Activated CD4-positive, alpha-beta T cell treated with anti-CD3 and anti-CD28 coated beads for 36 hours (primary cell): ENCODE measurements at regions of chr1 and their contacts with region 1.

Region 1: GRCh38 chr1:168342572-168343280 is 62.0 kb downstream of the TBX19 start:
- DNase-seq: peak; percentile 94
- ATAC-seq: peak; percentile 98
- H3K4me3 Mint-ChIP-seq: no peak overlapping the region
- H3K27ac Mint-ChIP-seq: peak overlapping the region; percentile 27
- H3K4me1 Mint-ChIP-seq: peaks cover 24% of the 10 kb centered on the region
- H3K27me3 Mint-ChIP-seq: no peaks in the 10 kb centered on the region

Region 2: GRCh38 chr1:168285419-168285790 is 57.3 kb before region 1 on chr1:
- CTCF ChIA-PET with region 1: no interaction called
- POLR2A ChIA-PET with region 1: no interaction called
- intact Hi-C with region 1: no loop called
- DNase-seq: no peak
- ATAC-seq: no peak
- H3K4me3 Mint-ChIP-seq: no peak overlapping the region
- H3K27ac Mint-ChIP-seq: no peak overlapping the region
- H3K4me1 Mint-ChIP-seq: peaks cover 20% of the 10 kb centered on the region
- H3K27me3 Mint-ChIP-seq: no peaks in the 10 kb centered on the region

Region 3: GRCh38 chr1:168328731-168329399 is 13.9 kb before region 1 on chr1:
- CTCF ChIA-PET with region 1: interaction called, 52 read pairs
- POLR2A ChIA-PET with region 1: no interaction called
- intact Hi-C with region 1: no loop called
- DNase-seq: no peak
- ATAC-seq: no peak
- H3K4me3 Mint-ChIP-seq: no peak overlapping the region
- H3K27ac Mint-ChIP-seq: no peak overlapping the region
- H3K4me1 Mint-ChIP-seq: no peaks in the 10 kb centered on the region
- H3K27me3 Mint-ChIP-seq: no peaks in the 10 kb centered on the region

Region 4: DNA sequence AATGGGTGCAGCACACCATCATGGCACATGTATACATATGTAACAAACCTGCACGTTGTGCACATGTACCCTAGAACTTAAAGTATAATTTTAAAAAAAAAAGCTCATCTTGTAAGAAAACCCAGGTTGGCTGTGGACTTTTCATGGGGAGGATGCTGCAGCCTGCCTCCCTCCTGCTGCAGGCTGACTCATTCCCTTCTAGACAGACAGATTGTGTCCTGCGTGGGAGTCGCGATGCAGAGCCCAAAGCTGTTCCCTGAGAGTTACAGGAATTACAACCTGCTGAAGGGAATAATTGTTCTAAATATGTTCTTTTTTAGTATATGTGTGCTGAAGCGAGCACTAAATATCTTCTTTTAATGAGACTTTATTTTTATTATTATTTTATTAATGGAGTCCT is 31.1 kb after region 1 on chr1:
- CTCF ChIA-PET with region 1: interaction called, 16 read pairs
- POLR2A ChIA-PET with region 1: no interaction called
- intact Hi-C with region 1: no loop called
- DNase-seq: no peak
- ATAC-seq: peak; percentile 49
- H3K4me3 Mint-ChIP-seq: no peak overlapping the region
- H3K27ac Mint-ChIP-seq: no peak overlapping the region
- H3K4me1 Mint-ChIP-seq: no peaks in the 10 kb centered on the region
- H3K27me3 Mint-ChIP-seq: no peaks in the 10 kb centered on the region

Region 5: DNA sequence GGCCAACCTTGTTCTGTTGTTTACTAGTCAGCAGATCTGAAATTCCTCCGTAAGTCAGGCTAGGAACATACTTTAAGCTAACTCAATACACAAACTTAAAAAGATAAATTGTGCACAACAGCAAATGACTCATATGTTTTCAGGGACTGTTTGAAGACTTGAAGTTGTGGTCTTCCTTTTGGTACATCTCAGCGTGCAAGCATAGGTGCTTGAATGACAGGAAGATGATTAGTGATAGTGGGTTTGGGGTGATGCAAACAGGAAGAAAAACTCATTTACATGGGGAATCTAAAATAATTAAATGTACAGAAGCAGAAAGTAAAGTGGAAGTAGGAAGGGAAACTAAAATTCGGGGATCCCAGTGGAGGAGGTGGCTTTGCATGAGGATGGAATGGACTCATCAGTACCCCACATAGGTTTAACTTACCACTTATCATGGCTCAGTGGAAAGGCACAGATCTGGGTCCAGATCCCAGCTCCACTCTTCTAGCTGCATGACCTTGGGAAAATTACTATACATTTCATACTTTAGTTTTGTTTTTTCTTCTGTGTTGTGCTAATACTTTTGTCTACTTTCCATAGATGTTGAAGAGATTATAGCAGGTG is 78.8 kb after region 1 on chr1:
- CTCF ChIA-PET with region 1: interaction called, 13 read pairs
- POLR2A ChIA-PET with region 1: no interaction called
- intact Hi-C with region 1: loop called (anchors 5 kb)
- DNase-seq: no peak
- ATAC-seq: peak; percentile 97
- H3K4me3 Mint-ChIP-seq: peak overlapping the region; percentile 6
- H3K27ac Mint-ChIP-seq: peak overlapping the region; percentile 84
- H3K4me1 Mint-ChIP-seq: peaks cover 20% of the 10 kb centered on the region
- H3K27me3 Mint-ChIP-seq: no peaks in the 10 kb centered on the region

Region 6: GRCh38 chr1:168466092-168466713 is 123.5 kb after region 1 on chr1:
- CTCF ChIA-PET with region 1: interaction called, 11 read pairs
- POLR2A ChIA-PET with region 1: no interaction called
- intact Hi-C with region 1: no loop called
- DNase-seq: peak; percentile 77
- ATAC-seq: peak; percentile 93
- H3K4me3 Mint-ChIP-seq: no peak overlapping the region
- H3K27ac Mint-ChIP-seq: peak overlapping the region; percentile 72
- H3K4me1 Mint-ChIP-seq: peaks cover 56% of the 10 kb centered on the region
- H3K27me3 Mint-ChIP-seq: no peaks in the 10 kb centered on the region

Region 7: DNA sequence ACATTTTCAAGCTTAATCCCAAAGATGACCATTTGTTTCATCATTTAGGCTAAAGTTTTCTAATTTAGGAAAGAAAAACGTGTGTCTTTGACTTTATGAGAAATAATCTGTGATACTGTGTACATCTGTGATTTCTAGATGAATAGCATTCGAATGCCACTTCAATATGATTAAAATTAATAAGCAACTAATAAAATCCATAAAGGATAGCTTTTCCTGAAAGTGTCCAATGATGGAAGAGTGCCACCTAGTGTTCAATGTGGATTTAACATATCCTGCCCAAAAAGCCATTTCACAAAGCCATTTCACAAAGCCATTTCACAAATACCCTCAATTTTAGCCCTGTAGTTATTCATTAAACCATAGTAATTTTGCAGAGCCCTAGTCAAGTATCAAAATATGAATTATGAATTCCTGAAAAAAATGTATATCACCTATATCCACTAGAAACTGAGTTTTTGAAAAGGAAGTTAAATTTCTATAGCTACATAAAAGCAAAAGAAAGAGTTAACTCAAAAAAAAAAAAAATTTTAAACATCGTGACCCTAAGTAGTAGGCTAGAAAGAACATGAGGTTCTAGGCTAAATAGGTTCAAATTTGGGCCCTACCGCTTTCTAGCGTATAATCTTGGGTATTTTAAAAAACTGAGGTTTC is 1005.8 kb after region 1 on chr1:
- CTCF ChIA-PET with region 1: interaction called, 4 read pairs
- POLR2A ChIA-PET with region 1: no interaction called
- intact Hi-C with region 1: loop called (anchors 2 to 5 kb)
- DNase-seq: no peak
- ATAC-seq: no peak
- H3K4me3 Mint-ChIP-seq: no peak overlapping the region
- H3K27ac Mint-ChIP-seq: no peak overlapping the region
- H3K4me1 Mint-ChIP-seq: peaks cover 14% of the 10 kb centered on the region
- H3K27me3 Mint-ChIP-seq: no peaks in the 10 kb centered on the region